Uterus (tissue), 4 donors: ENCODE measurements at regions of chr1 and their contacts with region 1.

Region 1: DNA sequence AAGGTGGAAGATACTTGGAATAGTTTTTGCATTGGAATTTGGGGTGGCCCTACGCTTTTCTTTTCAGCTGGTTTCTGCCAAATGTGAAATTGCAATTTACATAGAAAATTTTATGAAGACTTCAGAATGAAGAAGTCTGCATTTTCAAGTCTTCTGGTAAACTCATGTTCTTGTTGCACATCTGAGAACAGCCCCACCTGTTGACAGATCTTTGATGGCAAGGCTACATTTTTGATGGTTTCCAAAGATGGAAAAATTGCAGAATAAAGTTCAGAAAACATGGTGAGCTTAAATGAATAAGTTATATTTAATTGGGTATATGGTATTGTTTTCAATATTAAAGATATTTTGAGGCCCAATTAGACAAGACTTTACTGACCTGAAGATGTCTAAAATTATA is 25.4 kb downstream of the OLFM3 start:
- DNase-seq: no peak
- H3K4me3 ChIP-seq: no peak overlapping the region
- H3K27ac ChIP-seq: no peak overlapping the region
- H3K4me1 ChIP-seq: no peaks in the 10 kb centered on the region
- H3K27me3 ChIP-seq: no peaks in the 10 kb centered on the region
- CTCF ChIP-seq: no peak
- POLR2A ChIP-seq: no peak

Region 2: GRCh38 chr1:101833312-101833711 is 138.0 kb before region 1 on chr1:
- intact Hi-C with region 1: loop called (anchors 5 kb)
- DNase-seq: no peak
- H3K4me3 ChIP-seq: no peak overlapping the region
- H3K27ac ChIP-seq: no peak overlapping the region
- H3K4me1 ChIP-seq: no peaks in the 10 kb centered on the region
- H3K27me3 ChIP-seq: no peaks in the 10 kb centered on the region
- CTCF ChIP-seq: no peak
- POLR2A ChIP-seq: no peak

Region 3: DNA sequence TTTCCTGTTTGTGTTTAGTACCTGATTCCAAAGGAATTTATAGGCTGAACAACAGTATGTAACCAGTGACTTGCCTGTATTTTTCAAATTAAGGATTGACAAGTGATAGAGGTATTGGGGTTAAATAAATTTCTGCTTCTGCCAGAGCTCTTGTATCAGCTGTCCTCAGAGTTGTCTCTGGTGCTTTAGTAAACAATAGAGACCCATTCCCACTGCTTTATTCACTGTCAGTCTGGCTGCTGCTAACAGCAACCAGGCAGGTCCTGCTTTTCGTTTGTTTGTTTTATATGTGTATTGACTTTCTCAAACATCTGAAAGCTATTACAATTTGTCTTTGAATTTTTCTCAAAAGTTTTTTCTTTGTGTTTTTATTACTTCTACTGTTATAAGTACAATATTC is 50.7 kb before region 1 on chr1:
- intact Hi-C with region 1: no loop called
- DNase-seq: no peak
- H3K4me3 ChIP-seq: no peak overlapping the region
- H3K27ac ChIP-seq: no peak overlapping the region
- H3K4me1 ChIP-seq: no peaks in the 10 kb centered on the region
- H3K27me3 ChIP-seq: no peaks in the 10 kb centered on the region
- CTCF ChIP-seq: no peak
- POLR2A ChIP-seq: no peak

Region 4: DNA sequence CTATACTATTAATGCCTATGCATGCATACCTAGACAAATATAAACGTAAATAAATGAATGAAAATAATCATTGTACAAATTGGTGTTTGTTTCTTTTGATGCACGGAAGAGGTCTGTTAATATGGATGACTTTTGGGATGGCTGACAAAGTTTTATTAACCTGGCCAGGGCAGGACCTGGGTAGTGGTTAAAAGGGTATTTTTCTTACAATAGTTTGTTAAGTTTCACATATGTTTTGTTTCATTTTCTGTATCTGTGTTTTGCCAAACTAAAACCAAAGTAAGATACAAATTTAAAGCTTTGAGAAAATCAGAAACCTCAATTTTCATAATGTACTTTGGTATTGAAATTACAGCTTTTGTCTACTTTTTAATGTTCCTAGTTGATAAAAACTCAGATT is 248.2 kb after region 1 on chr1:
- intact Hi-C with region 1: no loop called
- DNase-seq: no peak
- H3K4me3 ChIP-seq: no peak overlapping the region
- H3K27ac ChIP-seq: no peak overlapping the region
- H3K4me1 ChIP-seq: no peaks in the 10 kb centered on the region
- H3K27me3 ChIP-seq: no peaks in the 10 kb centered on the region
- CTCF ChIP-seq: no peak
- POLR2A ChIP-seq: no peak